Posterior cingulate gyrus (tissue), 11 donors: ENCODE measurements at regions of chr3 and their contacts with region 1.

Region 1: GRCh38 chr3:24494618-24495325 is at the start of gene THRB:
- DNase-seq: peak; percentile 48 to 95 (median 69)

Region 2: DNA sequence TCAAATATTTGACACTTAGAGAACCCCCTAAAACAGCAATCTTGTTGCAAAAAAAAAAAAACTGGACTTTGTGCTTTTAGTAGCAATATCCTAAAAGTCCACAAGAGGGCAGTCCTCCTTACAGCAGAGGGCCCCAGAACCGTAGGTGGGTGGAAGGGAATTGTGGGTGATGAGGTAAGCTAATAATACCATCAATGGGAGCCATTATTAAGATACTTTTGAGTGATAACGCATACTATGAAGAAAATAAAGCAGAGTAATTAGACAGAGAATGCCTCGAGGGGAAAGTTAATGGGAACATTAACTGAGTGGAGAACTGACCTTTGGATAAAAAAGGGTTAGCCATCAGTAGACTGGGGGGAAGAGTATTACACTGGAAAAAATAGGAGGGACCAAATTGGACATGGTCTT is 230.0 kb before region 1 on chr3:
- intact Hi-C with region 1: loop called (anchors 10 kb)
- DNase-seq: no peak

Region 3: GRCh38 chr3:24296441-24297205 is 198.1 kb before region 1 on chr3:
- intact Hi-C with region 1: no loop called
- DNase-seq: no peak

Region 4: DNA sequence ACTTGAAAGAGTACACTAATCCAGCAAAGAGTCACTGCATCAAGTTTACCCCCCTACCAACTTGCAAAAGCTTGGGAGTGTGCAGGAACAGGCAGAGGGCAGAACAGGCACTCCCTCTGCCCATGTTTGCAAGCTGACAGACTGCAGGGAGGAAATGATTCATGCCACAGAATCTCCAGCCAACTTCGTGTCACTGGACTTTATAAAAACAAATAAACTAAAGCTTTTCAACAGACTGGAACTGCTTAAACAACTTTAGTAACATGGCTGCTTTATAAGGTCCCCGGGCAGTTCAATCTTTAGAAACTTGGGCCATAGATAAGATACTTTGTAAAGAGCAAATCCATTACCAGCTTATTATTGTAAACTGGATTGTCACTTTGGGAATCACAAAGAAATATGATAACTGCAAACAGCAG is 129.6 kb before region 1 on chr3:
- intact Hi-C with region 1: loop called (anchors 10 kb)
- DNase-seq: peak in 2 of 10 donors; percentile 10 to 66